Cardiac septum (tissue), 1 donor: ENCODE measurements at regions of chr15 and their contacts with region 1.

Region 1: GRCh38 chr15:37100109-37100965 is at the start of gene MEIS2:
- DNase-seq: peak; percentile 93
- total RNA-seq, gene MEIS2: 40.3 TPM

Region 2: DNA sequence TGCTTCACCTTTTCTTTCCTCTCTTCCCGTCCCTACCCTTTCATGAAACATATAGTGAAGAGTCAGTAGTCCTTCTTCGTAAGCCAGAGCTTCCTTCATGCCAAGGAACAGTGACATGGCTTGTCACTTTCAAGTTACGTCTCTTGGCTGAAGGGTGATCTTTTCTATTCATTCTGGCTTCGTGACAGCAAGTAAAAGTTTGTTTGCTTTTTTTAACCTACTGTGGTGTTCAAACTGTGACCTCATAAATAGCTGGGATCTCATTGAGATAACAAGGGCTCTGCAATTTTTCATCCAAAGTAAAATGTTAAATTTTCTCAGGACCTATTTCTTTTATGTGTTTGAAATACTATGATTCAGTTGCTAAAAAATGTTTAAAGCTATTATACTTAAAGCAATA is 510.4 kb before region 1 on chr15:
- intact Hi-C with region 1: loop called (anchors 5 kb)
- DNase-seq: no peak

Region 3: GRCh38 chr15:36601497-36601932 is 498.8 kb before region 1 on chr15:
- intact Hi-C with region 1: loop called (anchors 5 kb)
- DNase-seq: no peak

Region 4: GRCh38 chr15:36883713-36884517 is 216.4 kb before region 1 on chr15:
- intact Hi-C with region 1: loop called (anchors 5 kb)
- DNase-seq: peak; percentile 91

Region 5: GRCh38 chr15:37015035-37015434 is 85.3 kb before region 1 on chr15:
- intact Hi-C with region 1: loop called (anchors 5 kb)
- DNase-seq: no peak